ENCODE measurements at regions of chr12 and their contacts with region 1.

Region 1: DNA sequence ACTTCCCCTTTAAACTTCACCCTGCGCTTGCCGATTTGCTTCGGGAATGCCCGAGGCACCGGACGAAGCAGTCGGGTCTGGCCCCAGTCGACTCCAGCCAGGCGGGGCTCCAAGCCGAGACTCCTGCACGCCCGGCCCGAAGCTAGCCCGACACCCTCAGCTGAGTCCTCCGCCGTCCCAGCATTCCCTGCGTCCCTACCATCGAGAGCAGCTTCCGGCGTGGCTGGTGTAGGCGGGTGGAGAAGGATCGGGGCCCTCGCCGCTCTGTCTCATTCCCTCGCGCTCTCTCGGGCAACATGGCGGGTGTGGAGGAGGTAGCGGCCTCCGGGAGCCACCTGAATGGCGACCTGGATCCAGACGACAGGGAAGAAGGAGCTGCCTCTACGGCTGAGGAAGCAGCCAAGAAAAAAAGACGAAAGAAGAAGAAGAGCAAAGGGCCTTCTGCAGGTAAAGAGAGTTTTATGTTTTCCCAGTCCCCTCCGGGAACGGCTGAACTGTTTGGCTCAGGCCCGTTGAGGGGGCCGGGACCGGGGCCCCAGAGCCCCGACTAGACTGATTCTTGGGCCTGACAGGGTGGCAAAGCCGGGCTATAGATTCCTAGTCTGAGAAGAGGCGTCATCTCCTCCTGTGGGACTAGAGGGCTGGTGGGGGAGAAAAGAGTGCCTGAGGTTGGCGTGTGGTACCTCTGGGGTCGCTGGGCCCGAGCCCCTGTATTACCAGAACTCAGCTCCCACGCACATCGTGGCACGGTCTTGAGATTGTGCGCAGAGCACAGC is at the start of gene METAP2:
- DNase-seq: peak; percentile 75 to 93 (median 87)
- ATAC-seq: peak; percentile 98
- H3K4me3 ChIP-seq: peak within 1 kb of the TSS; percentile 81
- H3K4me3 Mint-ChIP-seq: peak within 1 kb of the TSS; percentile 96 to 100 (median 99)
- H3K27ac ChIP-seq: peak within 1 kb of the TSS; percentile 92
- H3K27ac Mint-ChIP-seq: peak within 1 kb of the TSS; percentile 95 to 100 (median 99)
- H3K4me1 ChIP-seq: peaks cover 10 to 39% of the 10 kb centered on the region in 2 donors
- H3K4me1 Mint-ChIP-seq: peaks cover 31 to 70% (median 55%) of the 10 kb centered on the region in 7 donors
- H3K27me3 ChIP-seq: no peaks in the 10 kb centered on the region
- H3K27me3 Mint-ChIP-seq: no peaks in the 10 kb centered on the region
- total RNA-seq, gene METAP2: 48.2 to 79.9 (median 57.3) TPM

Region 2: GRCh38 chr12:95117178-95117599 is 356.9 kb before region 1 on chr12:
- CTCF ChIA-PET with region 1: no interaction called
- POLR2A ChIA-PET with region 1: no interaction called
- intact Hi-C with region 1: loop called in 1 of 2 experiments (anchors 5 kb)
- DNase-seq: peak; percentile 16 to 77 (median 67)
- ATAC-seq: peak; percentile 87
- H3K4me3 ChIP-seq: no peak overlapping the region
- H3K4me3 Mint-ChIP-seq: no peak overlapping the region
- H3K27ac ChIP-seq: no peak overlapping the region
- H3K27ac Mint-ChIP-seq: no peak overlapping the region
- H3K4me1 ChIP-seq: no peaks in the 10 kb centered on the region
- H3K4me1 Mint-ChIP-seq: peaks cover 0 to 7% (median 0%) of the 10 kb centered on the region in 7 donors
- H3K27me3 ChIP-seq: no peaks in the 10 kb centered on the region
- H3K27me3 Mint-ChIP-seq: no peaks in the 10 kb centered on the region

Region 3: GRCh38 chr12:95428472-95428871 is 45.6 kb before region 1 on chr12:
- CTCF ChIA-PET with region 1: interaction called, 3 read pairs
- POLR2A ChIA-PET with region 1: interaction called, 13 read pairs
- intact Hi-C with region 1: loop called (anchors 1 to 2 kb)
- DNase-seq: peak in 8 of 9 donors; percentile 21 to 70 (median 47)
- ATAC-seq: peak; percentile 96
- H3K4me3 ChIP-seq: peak overlapping the region; percentile 32
- H3K4me3 Mint-ChIP-seq: peak overlapping the region; percentile 72 to 91 (median 76)
- H3K27ac ChIP-seq: peak overlapping the region; percentile 53
- H3K27ac Mint-ChIP-seq: peak overlapping the region; percentile 87 to 97 (median 89)
- H3K4me1 ChIP-seq: no peaks in the 10 kb centered on the region
- H3K4me1 Mint-ChIP-seq: peaks cover 10 to 20% (median 15%) of the 10 kb centered on the region in 7 donors
- H3K27me3 ChIP-seq: no peaks in the 10 kb centered on the region
- H3K27me3 Mint-ChIP-seq: peaks cover 0 to 8% (median 0%) of the 10 kb centered on the region in 5 donors

Region 4: GRCh38 chr12:95858479-95859343 is 384.6 kb after region 1 on chr12 and contains the start of gene SNRPF:
- CTCF ChIA-PET with region 1: no interaction called
- POLR2A ChIA-PET with region 1: interaction called, 3 read pairs
- intact Hi-C with region 1: loop called (anchors 1 kb)
- DNase-seq: peak; percentile 88 to 96 (median 92)
- ATAC-seq: peak; percentile 98
- H3K4me3 ChIP-seq: peak within 1 kb of the TSS; percentile 82
- H3K4me3 Mint-ChIP-seq: no peak within 1 kb of the TSS
- H3K27ac ChIP-seq: peak within 1 kb of the TSS; percentile 86
- H3K27ac Mint-ChIP-seq: no peak within 1 kb of the TSS
- H3K4me1 ChIP-seq: peaks cover 11 to 12% of the 10 kb centered on the region in 2 donors
- H3K4me1 Mint-ChIP-seq: peaks cover 13 to 27% (median 16%) of the 10 kb centered on the region in 7 donors
- H3K27me3 ChIP-seq: no peaks in the 10 kb centered on the region
- H3K27me3 Mint-ChIP-seq: peaks cover 3 to 11% (median 7%) of the 10 kb centered on the region in 5 donors
- total RNA-seq, gene SNRPF: 19.0 to 40.4 (median 21.7) TPM

Measured in naive thymus-derived CD4-positive, alpha-beta T cell (primary cell).